ENCODE measurements at regions of chr2 and their contacts with region 1.

Region 1: GRCh38 chr2:29115797-29116781 is 874 bp downstream of the CLIP4 start:
- DNase-seq: peak; percentile 78
- ATAC-seq: peak; percentile 64
- H3K4me3 ChIP-seq: peak overlapping the region; percentile 86
- H3K27ac ChIP-seq: peak overlapping the region; percentile 83
- H3K4me1 ChIP-seq: peaks cover 32% of the 10 kb centered on the region
- H3K27me3 ChIP-seq: no peaks in the 10 kb centered on the region
- CTCF ChIP-seq: no peak
- EP300 ChIP-seq: no peak
- POLR2A ChIP-seq: peak; percentile 51; the same call in 1 of the 2 replicates
- RAD21 ChIP-seq: no peak

Region 2: DNA sequence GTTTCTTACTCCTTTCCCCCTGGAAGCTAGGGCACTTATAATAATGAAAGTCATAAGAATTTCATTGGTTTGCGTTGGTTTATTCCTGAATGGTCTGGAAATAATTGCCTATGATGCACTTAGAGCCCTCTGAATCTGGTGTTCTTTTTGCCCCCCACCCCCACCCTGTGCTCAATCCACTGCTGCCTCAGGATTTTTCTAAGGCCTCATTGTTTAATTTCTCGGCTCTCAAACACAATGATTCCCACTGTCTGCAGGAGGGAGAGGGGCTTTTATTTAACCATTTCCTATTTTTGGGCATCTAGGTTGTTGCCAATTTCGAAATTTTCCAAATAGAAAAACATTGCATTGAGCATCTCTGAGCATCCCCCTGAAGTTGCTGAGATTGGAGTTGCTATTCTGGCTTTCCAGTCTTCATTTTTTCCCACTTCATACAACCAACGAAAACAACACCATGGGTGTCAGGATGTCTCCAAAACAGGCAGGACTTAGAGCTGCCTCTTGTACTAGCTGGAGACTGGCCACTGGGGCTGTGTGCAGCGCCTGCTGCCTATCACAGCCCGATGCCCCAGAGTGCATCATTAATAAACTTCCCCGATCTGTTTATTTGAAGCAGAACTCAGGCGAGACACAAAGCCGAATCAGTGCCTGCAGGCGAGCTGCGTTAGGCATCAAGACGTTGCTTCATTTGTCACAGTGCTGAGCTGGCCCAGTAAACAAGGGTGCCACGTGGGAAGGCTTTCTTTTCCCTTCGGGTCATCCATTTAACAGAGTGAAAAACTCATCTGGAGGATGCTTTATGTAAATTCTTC is 40.0 kb before region 1 on chr2:
- CTCF ChIA-PET with region 1: interaction called, 3 read pairs
- POLR2A ChIA-PET with region 1: no interaction called
- RAD21 ChIA-PET with region 1: no interaction called
- SMC1A ChIA-PET with region 1: interaction called, 5 read pairs
- in situ Hi-C with region 1: no loop called
- intact Hi-C with region 1: loop called (anchors 5 kb)
- DNase-seq: no peak
- ATAC-seq: no peak
- H3K4me3 ChIP-seq: no peak overlapping the region
- H3K27ac ChIP-seq: no peak overlapping the region
- H3K4me1 ChIP-seq: peaks cover 3% of the 10 kb centered on the region; the same call in 1 of the 2 replicates
- H3K27me3 ChIP-seq: no peaks in the 10 kb centered on the region
- CTCF ChIP-seq: no peak
- EP300 ChIP-seq: no peak
- POLR2A ChIP-seq: no peak
- RAD21 ChIP-seq: no peak